ENCODE measurements at regions of chr5 and their contacts with region 1.

Region 1: DNA sequence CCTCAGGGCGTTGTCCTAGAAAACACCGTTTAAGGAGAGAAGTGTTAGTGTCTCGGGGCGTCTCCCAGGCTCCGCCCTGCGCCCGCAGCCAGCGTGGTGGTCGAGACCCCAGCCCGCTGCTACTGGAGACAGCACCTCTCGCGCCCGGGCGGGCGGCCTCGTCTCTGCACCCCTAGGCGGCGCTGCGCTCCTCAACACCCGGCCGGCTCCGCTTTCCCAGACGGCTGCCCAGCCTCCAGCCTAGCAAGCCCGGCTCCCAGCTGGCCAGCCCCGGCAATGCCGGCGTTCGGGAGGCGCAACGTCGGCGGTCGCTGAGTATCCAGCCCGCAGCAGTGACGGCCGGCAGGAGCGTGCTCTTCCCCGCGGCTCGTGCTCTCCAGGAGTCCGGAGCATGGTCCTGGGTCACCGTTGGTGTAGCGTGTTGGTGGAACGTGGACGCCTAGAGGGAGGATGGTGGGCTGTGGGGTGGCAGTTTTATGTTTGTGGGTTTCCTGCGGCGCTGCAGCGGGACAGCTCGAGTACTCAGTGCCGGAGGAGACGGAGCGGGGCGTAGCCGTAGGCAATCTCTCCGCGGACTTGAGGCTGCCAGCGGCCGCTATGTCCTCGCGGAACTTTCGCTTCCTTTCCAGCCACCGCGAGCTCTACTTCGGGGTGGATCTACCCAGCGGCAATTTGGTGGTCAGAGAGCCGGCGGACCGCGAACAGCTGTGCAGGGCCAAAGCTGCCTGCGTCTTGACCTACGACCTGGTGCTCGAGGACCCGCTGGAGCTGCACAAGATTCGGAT is 536 bp downstream of the PCDHAC1 start:
- DNase-seq: peak; percentile 68
- ATAC-seq: peak; percentile 97
- H3K4me3 ChIP-seq: peak overlapping the region; percentile 37 to 58
- H3K27ac ChIP-seq: peak overlapping the region; percentile 23; the same call in 1 of the 2 replicates
- H3K4me1 ChIP-seq: peaks cover 2 to 15% of the 10 kb centered on the region in 2 experiments; a peak in 3 of 4 replicates
- H3K27me3 ChIP-seq: no peaks in the 10 kb centered on the region
- CTCF ChIP-seq: peak; percentile 76 to 90 (median 80)
- POLR2A ChIP-seq: no peak
- RAD21 ChIP-seq: peak; percentile 91

Region 2: GRCh38 chr5:140966293-140967225 is 39.9 kb after region 1 on chr5 and contains the start of gene PCDHAC2:
- CTCF ChIA-PET with region 1: no interaction called
- POLR2A ChIA-PET with region 1: no interaction called
- RAD21 ChIA-PET with region 1: no interaction called
- intact Hi-C with region 1: loop called (anchors 5 kb)
- DNase-seq: peak; percentile 48
- ATAC-seq: peak; percentile 91
- H3K4me3 ChIP-seq: peak within 1 kb of the TSS; percentile 58 to 65
- H3K27ac ChIP-seq: peak within 1 kb of the TSS; percentile 47; the same call in 1 of the 2 replicates
- H3K4me1 ChIP-seq: peaks cover 9 to 19% of the 10 kb centered on the region in 2 experiments; a peak in 3 of 4 replicates
- H3K27me3 ChIP-seq: no peaks in the 10 kb centered on the region
- CTCF ChIP-seq: no peak
- POLR2A ChIP-seq: no peak
- RAD21 ChIP-seq: no peak
- total RNA-seq, gene PCDHAC2: 3.2 TPM

Region 3: GRCh38 chr5:141001854-141002604 is 75.4 kb after region 1 on chr5:
- CTCF ChIA-PET with region 1: interaction called, 13 read pairs
- POLR2A ChIA-PET with region 1: no interaction called
- RAD21 ChIA-PET with region 1: interaction called in 1 of 2 experiments, 3 read pairs
- intact Hi-C with region 1: loop called (anchors 1 kb)
- DNase-seq: peak; percentile 31
- ATAC-seq: peak; percentile 57
- H3K4me3 ChIP-seq: peak overlapping the region; percentile 43 to 59
- H3K27ac ChIP-seq: peak overlapping the region; percentile 74
- H3K4me1 ChIP-seq: peaks cover 38 to 44% of the 10 kb centered on the region in 2 experiments
- H3K27me3 ChIP-seq: no peaks in the 10 kb centered on the region
- CTCF ChIP-seq: no peak
- POLR2A ChIP-seq: peak; percentile 19
- RAD21 ChIP-seq: no peak

Region 4: DNA sequence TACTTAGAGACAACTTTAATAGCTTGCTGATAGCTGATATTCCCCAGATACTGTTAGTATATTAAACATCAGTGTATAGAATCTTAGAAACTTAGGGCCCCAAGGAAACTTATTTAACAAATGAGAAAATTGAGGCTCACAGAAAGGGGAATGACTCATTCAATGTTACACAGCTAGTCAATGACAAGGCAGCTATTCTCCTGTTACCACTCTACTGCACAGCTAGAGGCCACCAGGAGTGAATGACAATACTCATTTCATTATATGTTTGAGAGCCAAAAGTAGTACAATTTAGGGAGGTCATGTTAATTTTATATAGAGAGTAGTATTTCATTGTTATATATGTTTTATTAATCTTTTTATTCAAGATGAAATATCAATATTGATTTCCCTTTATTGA is 91.3 kb after region 1 on chr5:
- CTCF ChIA-PET with region 1: interaction called, 4 read pairs
- POLR2A ChIA-PET with region 1: no interaction called
- RAD21 ChIA-PET with region 1: interaction called in 1 of 2 experiments, 3 read pairs
- intact Hi-C with region 1: loop called (anchors 5 kb)
- DNase-seq: no peak
- ATAC-seq: no peak; the same call in 1 of the 2 replicates
- H3K4me3 ChIP-seq: no peak overlapping the region
- H3K27ac ChIP-seq: no peak overlapping the region
- H3K4me1 ChIP-seq: no peaks in the 10 kb centered on the region
- H3K27me3 ChIP-seq: no peaks in the 10 kb centered on the region
- CTCF ChIP-seq: no peak
- POLR2A ChIP-seq: no peak
- RAD21 ChIP-seq: no peak

Measured in HCT116 (cell line).